Activated naive CD4-positive, alpha-beta T cell treated with anti-CD3 and anti-CD28 coated beads for 36 hours (primary cell): ENCODE measurements at regions of chr5 and their contacts with region 1.

Region 1: GRCh38 chr5:148120317-148120716 is 48.0 kb upstream of the SPINK14 start:
- DNase-seq: no peak
- H3K4me3 Mint-ChIP-seq: no peak overlapping the region
- H3K27ac Mint-ChIP-seq: no peak overlapping the region
- H3K4me1 Mint-ChIP-seq: no peaks in the 10 kb centered on the region
- H3K27me3 Mint-ChIP-seq: no peaks in the 10 kb centered on the region

Region 2: GRCh38 chr5:147857302-147858129 is 262.8 kb before region 1 on chr5:
- CTCF ChIA-PET with region 1: no interaction called
- intact Hi-C with region 1: loop called (anchors 2 kb)
- DNase-seq: peak; percentile 69
- H3K4me3 Mint-ChIP-seq: no peak overlapping the region
- H3K27ac Mint-ChIP-seq: no peak overlapping the region
- H3K4me1 Mint-ChIP-seq: no peaks in the 10 kb centered on the region
- H3K27me3 Mint-ChIP-seq: peaks cover 3% of the 10 kb centered on the region

Region 3: DNA sequence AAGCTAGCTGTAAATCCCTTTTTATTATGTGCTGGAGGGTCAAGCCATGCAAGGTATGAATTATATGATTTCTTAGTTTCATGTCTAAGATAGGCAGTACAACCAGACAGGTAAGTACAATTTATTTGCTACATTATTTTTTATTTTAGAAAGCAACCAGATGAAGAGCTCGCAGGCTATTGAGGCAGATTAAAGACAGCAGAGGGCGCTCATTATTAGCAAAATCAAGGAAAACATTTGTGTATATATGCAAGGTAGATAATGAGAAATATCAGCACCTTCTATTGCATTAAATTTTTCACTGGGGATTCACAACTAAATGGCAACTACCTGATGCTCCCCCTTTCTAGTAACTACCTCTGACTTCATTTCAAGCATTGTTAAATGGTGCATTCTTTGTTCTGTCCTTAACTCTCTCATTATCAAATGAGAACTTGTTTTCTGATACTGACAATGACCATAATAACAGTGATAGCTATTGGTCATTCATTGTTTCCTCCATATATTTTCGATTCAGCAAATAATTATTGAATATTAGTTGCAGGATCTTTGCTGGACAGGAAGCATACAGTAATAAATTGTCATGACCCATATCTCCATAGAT is 233.2 kb before region 1 on chr5:
- CTCF ChIA-PET with region 1: no interaction called
- intact Hi-C with region 1: loop called (anchors 5 kb)
- DNase-seq: no peak
- H3K4me3 Mint-ChIP-seq: no peak overlapping the region
- H3K27ac Mint-ChIP-seq: no peak overlapping the region
- H3K4me1 Mint-ChIP-seq: no peaks in the 10 kb centered on the region
- H3K27me3 Mint-ChIP-seq: peaks cover 8% of the 10 kb centered on the region